ENCODE measurements at regions of chr11 and their contacts with region 1.

Region 1: DNA sequence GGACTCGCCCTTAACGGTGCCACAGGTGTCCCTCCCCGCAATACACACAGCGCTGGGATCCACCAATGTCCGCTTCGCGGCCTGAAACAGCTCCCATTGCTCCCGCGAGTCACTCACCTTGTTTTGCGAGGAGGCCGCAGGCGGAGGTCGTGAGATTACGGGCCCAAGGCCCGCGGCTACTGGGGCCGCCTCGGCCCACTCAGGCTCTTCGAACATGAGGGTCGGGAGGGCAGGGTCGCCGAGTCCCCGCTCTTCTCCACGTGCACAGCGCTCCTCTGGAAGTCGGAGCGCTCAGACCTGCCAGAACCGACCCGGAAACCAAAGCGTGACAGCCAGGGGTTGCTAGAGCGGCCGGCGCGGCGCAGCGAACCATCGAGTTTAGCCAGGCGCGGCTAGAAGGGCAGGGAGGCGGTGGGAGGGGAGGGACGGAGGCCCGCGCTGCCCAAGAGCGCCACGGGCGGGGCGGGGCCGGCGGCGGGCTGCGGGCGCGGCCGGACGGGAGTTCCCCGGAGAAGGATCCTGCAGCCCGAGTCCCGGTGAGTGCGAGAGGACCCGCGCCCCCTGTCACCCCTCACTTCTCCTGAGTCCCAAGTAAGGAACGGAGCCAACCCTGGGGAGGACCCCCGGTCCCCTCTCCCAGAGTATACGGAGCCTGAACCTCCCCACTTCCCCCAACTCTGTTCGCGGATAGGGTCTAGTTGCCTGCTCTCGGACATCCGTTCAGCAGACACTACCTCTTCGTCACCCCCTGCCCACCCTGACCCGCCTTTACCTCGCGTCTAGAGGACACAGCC is at the starts of genes ILK and RRP8:
- DNase-seq: peak; percentile 91

Region 2: GRCh38 chr11:6544921-6545850 is 58.3 kb before region 1 on chr11:
- in situ Hi-C with region 1: loop called (anchors 10 kb)
- DNase-seq: no peak

Region 3: GRCh38 chr11:6850526-6850925 is 247.0 kb after region 1 on chr11:
- in situ Hi-C with region 1: no loop called
- DNase-seq: no peak